ENCODE measurements at regions of chrX and their contacts with region 1.

Region 1: GRCh38 chrX:153667956-153668396 is 5.6 kb downstream of the PNCK start:
- DNase-seq: peak; percentile 52 to 59 (median 56)
- H3K4me3 ChIP-seq: no peak overlapping the region
- H3K4me3 Mint-ChIP-seq: peak overlapping the region; percentile 65 to 78
- H3K27ac ChIP-seq: no peak overlapping the region
- H3K27ac Mint-ChIP-seq: no peak overlapping the region
- H3K4me1 ChIP-seq: no peaks in the 10 kb centered on the region
- H3K4me1 Mint-ChIP-seq: peaks cover 5% of the 10 kb centered on the region
- H3K27me3 ChIP-seq: peaks cover 3 to 14% of the 10 kb centered on the region in 2 donors
- H3K27me3 Mint-ChIP-seq: peaks cover 13 to 45% (median 40%) of the 10 kb centered on the region in 3 donors
- CTCF ChIP-seq: peak; percentile 71

Region 2: GRCh38 chrX:152941328-152942106 is 726.5 kb before region 1 on chrX:
- intact Hi-C with region 1: loop called in 1 of 2 experiments (anchors 10 kb)
- DNase-seq: peak; percentile 87 to 92 (median 91)
- H3K4me3 ChIP-seq: peak overlapping the region; percentile 42 to 75 (median 44)
- H3K4me3 Mint-ChIP-seq: peak overlapping the region; percentile 76 to 85
- H3K27ac ChIP-seq: peak overlapping the region in 1 of 2 donors; percentile 64
- H3K27ac Mint-ChIP-seq: peak overlapping the region; percentile 40 to 88 (median 80)
- H3K4me1 ChIP-seq: peaks cover 9 to 12% of the 10 kb centered on the region in 2 donors
- H3K4me1 Mint-ChIP-seq: peaks cover 10% of the 10 kb centered on the region
- H3K27me3 ChIP-seq: no peaks in the 10 kb centered on the region
- H3K27me3 Mint-ChIP-seq: peaks cover 0 to 3% (median 0%) of the 10 kb centered on the region in 3 donors
- CTCF ChIP-seq: peak; percentile 82

Region 3: GRCh38 chrX:153032397-153033118 is 635.4 kb before region 1 on chrX:
- intact Hi-C with region 1: loop called in 1 of 2 experiments (anchors 10 kb)
- DNase-seq: peak; percentile 68 to 71 (median 68)
- H3K4me3 ChIP-seq: peak overlapping the region; percentile 24 to 67 (median 48)
- H3K4me3 Mint-ChIP-seq: peak overlapping the region; percentile 81 to 88
- H3K27ac ChIP-seq: peak overlapping the region; percentile 50 to 84
- H3K27ac Mint-ChIP-seq: peak overlapping the region; percentile 87 to 97 (median 95)
- H3K4me1 ChIP-seq: peaks cover 7 to 8% of the 10 kb centered on the region in 2 donors
- H3K4me1 Mint-ChIP-seq: peaks cover 5% of the 10 kb centered on the region
- H3K27me3 ChIP-seq: no peaks in the 10 kb centered on the region
- H3K27me3 Mint-ChIP-seq: peaks cover 0 to 3% (median 0%) of the 10 kb centered on the region in 3 donors
- CTCF ChIP-seq: peak; percentile 82

Region 4: DNA sequence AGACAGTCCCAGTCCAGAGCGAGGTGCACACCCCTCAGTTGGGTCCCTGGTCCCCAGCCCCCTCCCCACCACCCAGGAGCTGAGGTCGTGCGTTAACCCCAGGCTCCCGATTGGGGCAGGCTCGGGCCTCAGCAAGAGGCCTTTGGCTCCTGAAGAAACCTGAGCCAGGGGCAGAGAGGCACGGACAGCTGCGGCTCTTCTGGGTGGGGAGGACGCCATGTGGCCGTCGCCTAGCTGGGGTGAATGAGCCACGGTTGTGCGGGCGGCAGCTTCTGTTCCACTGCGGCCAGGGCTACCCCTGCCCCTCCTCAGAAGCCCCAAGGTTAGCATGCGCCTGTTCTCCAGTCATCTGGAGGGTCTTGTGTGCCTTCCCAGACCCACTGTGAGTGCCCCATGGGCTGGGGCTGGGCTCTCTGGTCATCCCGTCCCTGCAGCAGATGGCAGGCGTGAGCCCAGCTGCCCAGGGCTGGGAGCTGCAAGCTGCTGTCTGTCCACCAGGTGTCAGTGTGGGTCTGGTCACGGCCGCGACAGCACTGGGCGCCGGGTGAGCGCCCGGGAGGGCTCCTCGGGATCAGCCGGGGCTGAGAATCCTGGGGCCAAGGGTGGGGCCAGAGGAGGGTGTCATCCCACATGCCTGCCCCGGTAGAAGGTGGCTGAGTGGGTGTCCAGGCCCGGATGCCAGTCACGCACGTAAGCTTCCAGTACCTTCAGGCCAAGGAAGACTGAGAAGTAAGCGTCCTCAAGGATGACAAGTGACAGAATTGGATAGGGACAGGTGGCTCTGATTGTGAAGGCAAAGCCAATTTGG is 128.6 kb before region 1 on chrX:
- intact Hi-C with region 1: loop called in 1 of 2 experiments (anchors 5 kb)
- DNase-seq: peak; percentile 36 to 47 (median 37)
- H3K4me3 ChIP-seq: no peak overlapping the region
- H3K4me3 Mint-ChIP-seq: no peak overlapping the region
- H3K27ac ChIP-seq: no peak overlapping the region
- H3K27ac Mint-ChIP-seq: peak overlapping the region in 1 of 7 donors; percentile 35
- H3K4me1 ChIP-seq: no peaks in the 10 kb centered on the region
- H3K4me1 Mint-ChIP-seq: no peaks in the 10 kb centered on the region
- H3K27me3 ChIP-seq: no peaks in the 10 kb centered on the region
- H3K27me3 Mint-ChIP-seq: peaks cover 2 to 13% (median 6%) of the 10 kb centered on the region in 3 donors
- CTCF ChIP-seq: peak; percentile 72

Region 5: DNA sequence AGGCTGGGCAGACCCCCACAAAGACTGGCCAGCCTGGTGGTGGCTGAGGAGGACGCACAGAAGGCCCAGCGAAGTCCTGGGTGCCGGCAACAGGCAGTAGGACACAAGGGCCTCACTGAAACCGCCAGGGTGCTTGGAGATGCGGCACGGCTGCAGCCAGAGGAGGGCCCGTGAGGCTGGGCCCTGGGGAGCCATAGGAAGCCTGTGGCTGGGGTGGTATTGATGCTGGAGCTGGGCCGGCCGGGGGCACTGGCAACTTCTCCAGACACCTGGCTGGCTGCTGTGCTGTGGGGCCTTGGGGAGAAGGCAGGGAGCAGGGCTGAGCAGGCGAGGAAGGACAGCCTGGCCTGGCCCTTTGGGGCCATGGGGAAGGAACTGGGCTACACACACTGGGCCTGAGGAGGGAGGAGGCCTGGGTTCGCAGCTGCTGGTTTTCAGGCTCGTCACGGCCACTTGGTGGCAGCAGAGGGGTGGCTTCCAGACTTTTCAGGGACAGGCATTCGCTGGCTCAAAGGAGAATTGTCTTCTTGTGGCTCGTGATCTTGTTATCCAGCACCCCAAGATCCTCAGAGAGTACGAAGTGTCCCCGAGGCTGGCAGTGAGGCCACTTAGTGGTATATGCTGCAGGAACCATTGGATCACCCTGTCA is 113.3 kb before region 1 on chrX:
- intact Hi-C with region 1: loop called (anchors 5 kb)
- DNase-seq: peak; percentile 37 to 57 (median 38)
- H3K4me3 ChIP-seq: no peak overlapping the region
- H3K4me3 Mint-ChIP-seq: no peak overlapping the region
- H3K27ac ChIP-seq: no peak overlapping the region
- H3K27ac Mint-ChIP-seq: no peak overlapping the region
- H3K4me1 ChIP-seq: peaks cover 3 to 4% of the 10 kb centered on the region in 2 donors
- H3K4me1 Mint-ChIP-seq: peaks cover 14% of the 10 kb centered on the region
- H3K27me3 ChIP-seq: no peaks in the 10 kb centered on the region
- H3K27me3 Mint-ChIP-seq: peaks cover 2 to 21% (median 3%) of the 10 kb centered on the region in 3 donors
- CTCF ChIP-seq: peak; percentile 57

Region 6: GRCh38 chrX:153592966-153593688 is 74.8 kb before region 1 on chrX:
- intact Hi-C with region 1: no loop called
- DNase-seq: no peak
- H3K4me3 ChIP-seq: no peak overlapping the region
- H3K4me3 Mint-ChIP-seq: no peak overlapping the region
- H3K27ac ChIP-seq: no peak overlapping the region
- H3K27ac Mint-ChIP-seq: no peak overlapping the region
- H3K4me1 ChIP-seq: peaks cover 11 to 13% of the 10 kb centered on the region in 2 donors
- H3K4me1 Mint-ChIP-seq: peaks cover 17% of the 10 kb centered on the region
- H3K27me3 ChIP-seq: no peaks in the 10 kb centered on the region
- H3K27me3 Mint-ChIP-seq: peaks cover 0 to 11% (median 0%) of the 10 kb centered on the region in 3 donors
- CTCF ChIP-seq: no peak

Region 7: GRCh38 chrX:153609917-153610428 is 58.0 kb before region 1 on chrX:
- intact Hi-C with region 1: no loop called
- DNase-seq: peak; percentile 44 to 61 (median 50)
- H3K4me3 ChIP-seq: peak overlapping the region; percentile 24 to 71 (median 32)
- H3K4me3 Mint-ChIP-seq: peak overlapping the region; percentile 81 to 85
- H3K27ac ChIP-seq: no peak overlapping the region
- H3K27ac Mint-ChIP-seq: no peak overlapping the region
- H3K4me1 ChIP-seq: peaks cover 17 to 22% of the 10 kb centered on the region in 2 donors
- H3K4me1 Mint-ChIP-seq: peaks cover 19% of the 10 kb centered on the region
- H3K27me3 ChIP-seq: peaks cover 0 to 8% of the 10 kb centered on the region in 2 donors
- H3K27me3 Mint-ChIP-seq: peaks cover 9 to 37% (median 32%) of the 10 kb centered on the region in 3 donors
- CTCF ChIP-seq: peak; percentile 84

Region 8: GRCh38 chrX:154002215-154002719 is 334.3 kb after region 1 on chrX:
- intact Hi-C with region 1: no loop called
- DNase-seq: peak; percentile 75 to 88 (median 81)
- H3K4me3 ChIP-seq: peak overlapping the region in 2 of 3 experiments; percentile 26 to 66
- H3K4me3 Mint-ChIP-seq: peak overlapping the region; percentile 66 to 88
- H3K27ac ChIP-seq: peak overlapping the region; percentile 83 to 91
- H3K27ac Mint-ChIP-seq: peak overlapping the region; percentile 93 to 97 (median 95)
- H3K4me1 ChIP-seq: peaks cover 43 to 47% of the 10 kb centered on the region in 2 donors
- H3K4me1 Mint-ChIP-seq: peaks cover 40% of the 10 kb centered on the region
- H3K27me3 ChIP-seq: peaks cover 0 to 3% of the 10 kb centered on the region in 2 donors
- H3K27me3 Mint-ChIP-seq: peaks cover 0 to 53% (median 0%) of the 10 kb centered on the region in 3 donors
- CTCF ChIP-seq: no peak

Region 9: DNA sequence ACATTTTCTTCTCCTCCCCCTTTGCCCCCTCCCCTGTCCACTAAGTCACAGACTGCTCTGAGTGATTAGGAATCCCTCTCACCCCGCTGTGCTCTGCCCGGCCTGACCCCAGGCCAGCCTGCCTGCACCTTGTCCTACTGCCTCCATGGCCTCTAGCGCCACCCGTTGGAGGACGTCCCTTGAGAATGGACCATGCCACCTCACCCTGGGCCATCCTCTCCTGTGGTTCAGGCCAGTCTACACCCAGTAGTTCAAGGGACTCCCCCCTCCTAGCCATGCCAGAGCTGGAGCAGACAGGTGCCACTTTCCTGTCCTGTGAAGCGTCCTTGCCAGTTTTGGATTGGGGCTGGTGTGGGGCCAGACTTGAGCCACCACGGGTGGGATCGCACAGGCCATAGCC is 361.5 kb after region 1 on chrX:
- intact Hi-C with region 1: no loop called
- DNase-seq: no peak
- H3K4me3 ChIP-seq: no peak overlapping the region
- H3K4me3 Mint-ChIP-seq: no peak overlapping the region
- H3K27ac ChIP-seq: no peak overlapping the region
- H3K27ac Mint-ChIP-seq: peak overlapping the region in 1 of 7 donors; percentile 82
- H3K4me1 ChIP-seq: no peaks in the 10 kb centered on the region
- H3K4me1 Mint-ChIP-seq: no peaks in the 10 kb centered on the region
- H3K27me3 ChIP-seq: no peaks in the 10 kb centered on the region
- H3K27me3 Mint-ChIP-seq: peaks cover 0 to 59% (median 0%) of the 10 kb centered on the region in 3 donors
- CTCF ChIP-seq: no peak

Measured in CD14-positive monocyte (primary cell).